Activated naive CD8-positive, alpha-beta T cell treated with anti-CD3 and anti-CD28 coated beads, Interleukin-2, amount 10 ng/mL, durations not matched to agents 7 days and 5 days (primary cell): ENCODE measurements at regions of chr13 and their contacts with region 1.

Region 1: GRCh38 chr13:102773441-102774215 is at the start of gene TEX30:
- DNase-seq: peak; percentile 96
- ATAC-seq: peak; percentile 94
- H3K4me3 Mint-ChIP-seq: peak within 1 kb of the TSS; percentile 81
- H3K27ac Mint-ChIP-seq: peak within 1 kb of the TSS; percentile 89
- H3K4me1 Mint-ChIP-seq: peaks cover 49% of the 10 kb centered on the region
- H3K27me3 Mint-ChIP-seq: no peaks in the 10 kb centered on the region
- total RNA-seq, gene TEX30: 22.2 to 23.0 TPM

Region 2: GRCh38 chr13:102742101-102742500 is 31.5 kb before region 1 on chr13:
- POLR2A ChIA-PET with region 1: no interaction called
- DNase-seq: no peak
- ATAC-seq: no peak
- H3K4me3 Mint-ChIP-seq: no peak overlapping the region
- H3K27ac Mint-ChIP-seq: no peak overlapping the region
- H3K4me1 Mint-ChIP-seq: no peaks in the 10 kb centered on the region
- H3K27me3 Mint-ChIP-seq: peaks cover 44% of the 10 kb centered on the region

Region 3: GRCh38 chr13:102845630-102846260 is 72.1 kb after region 1 on chr13 and contains the start of gene ERCC5:
- POLR2A ChIA-PET with region 1: interaction called, 53 read pairs
- DNase-seq: peak; percentile 96
- ATAC-seq: peak; percentile 82
- H3K4me3 Mint-ChIP-seq: peak within 1 kb of the TSS; percentile 96
- H3K27ac Mint-ChIP-seq: peak within 1 kb of the TSS; percentile 98
- H3K4me1 Mint-ChIP-seq: peaks cover 27% of the 10 kb centered on the region
- H3K27me3 Mint-ChIP-seq: no peaks in the 10 kb centered on the region
- total RNA-seq, gene ERCC5: 102 to 111 TPM